ENCODE measurements at regions of chr2 and their contacts with region 1.

Region 1: GRCh38 chr2:112692496-112692911 is 28.3 kb upstream of the NT5DC4 start:
- DNase-seq: peak; percentile 83
- ATAC-seq: peak; percentile 94
- H3K4me3 Mint-ChIP-seq: no peak overlapping the region
- H3K27ac Mint-ChIP-seq: peak overlapping the region; percentile 83
- H3K4me1 Mint-ChIP-seq: peaks cover 37% of the 10 kb centered on the region
- H3K27me3 Mint-ChIP-seq: peaks cover 16% of the 10 kb centered on the region

Region 2: GRCh38 chr2:112601751-112602150 is 90.8 kb before region 1 on chr2:
- CTCF ChIA-PET with region 1: interaction called, 16 read pairs
- POLR2A ChIA-PET with region 1: no interaction called
- DNase-seq: no peak
- ATAC-seq: no peak
- H3K4me3 Mint-ChIP-seq: no peak overlapping the region
- H3K27ac Mint-ChIP-seq: no peak overlapping the region
- H3K4me1 Mint-ChIP-seq: peaks cover 5% of the 10 kb centered on the region
- H3K27me3 Mint-ChIP-seq: no peaks in the 10 kb centered on the region

Region 3: GRCh38 chr2:112645310-112646101 is 47.0 kb before region 1 on chr2 and contains the start of gene SLC20A1:
- CTCF ChIA-PET with region 1: interaction called, 20 read pairs
- POLR2A ChIA-PET with region 1: interaction called, 6 read pairs
- DNase-seq: peak; percentile 97
- ATAC-seq: peak; percentile 94
- H3K4me3 Mint-ChIP-seq: peak within 1 kb of the TSS; percentile 92
- H3K27ac Mint-ChIP-seq: peak within 1 kb of the TSS; percentile 90
- H3K4me1 Mint-ChIP-seq: peaks cover 65% of the 10 kb centered on the region
- H3K27me3 Mint-ChIP-seq: peaks cover 3% of the 10 kb centered on the region
- total RNA-seq, gene SLC20A1: 115 to 120 TPM

Region 4: GRCh38 chr2:112706170-112706664 is 13.7 kb after region 1 on chr2:
- CTCF ChIA-PET with region 1: interaction called, 45 read pairs
- POLR2A ChIA-PET with region 1: interaction called, 8 read pairs
- DNase-seq: peak; percentile 94
- ATAC-seq: peak; percentile 98
- H3K4me3 Mint-ChIP-seq: peak overlapping the region; percentile 58
- H3K27ac Mint-ChIP-seq: peak overlapping the region; percentile 71
- H3K4me1 Mint-ChIP-seq: peaks cover 41% of the 10 kb centered on the region
- H3K27me3 Mint-ChIP-seq: peaks cover 33% of the 10 kb centered on the region

Region 5: GRCh38 chr2:112740527-112740926 is 48.0 kb after region 1 on chr2:
- CTCF ChIA-PET with region 1: no interaction called
- POLR2A ChIA-PET with region 1: no interaction called
- DNase-seq: no peak
- ATAC-seq: no peak
- H3K4me3 Mint-ChIP-seq: no peak overlapping the region
- H3K27ac Mint-ChIP-seq: no peak overlapping the region
- H3K4me1 Mint-ChIP-seq: no peaks in the 10 kb centered on the region
- H3K27me3 Mint-ChIP-seq: no peaks in the 10 kb centered on the region

Region 6: DNA sequence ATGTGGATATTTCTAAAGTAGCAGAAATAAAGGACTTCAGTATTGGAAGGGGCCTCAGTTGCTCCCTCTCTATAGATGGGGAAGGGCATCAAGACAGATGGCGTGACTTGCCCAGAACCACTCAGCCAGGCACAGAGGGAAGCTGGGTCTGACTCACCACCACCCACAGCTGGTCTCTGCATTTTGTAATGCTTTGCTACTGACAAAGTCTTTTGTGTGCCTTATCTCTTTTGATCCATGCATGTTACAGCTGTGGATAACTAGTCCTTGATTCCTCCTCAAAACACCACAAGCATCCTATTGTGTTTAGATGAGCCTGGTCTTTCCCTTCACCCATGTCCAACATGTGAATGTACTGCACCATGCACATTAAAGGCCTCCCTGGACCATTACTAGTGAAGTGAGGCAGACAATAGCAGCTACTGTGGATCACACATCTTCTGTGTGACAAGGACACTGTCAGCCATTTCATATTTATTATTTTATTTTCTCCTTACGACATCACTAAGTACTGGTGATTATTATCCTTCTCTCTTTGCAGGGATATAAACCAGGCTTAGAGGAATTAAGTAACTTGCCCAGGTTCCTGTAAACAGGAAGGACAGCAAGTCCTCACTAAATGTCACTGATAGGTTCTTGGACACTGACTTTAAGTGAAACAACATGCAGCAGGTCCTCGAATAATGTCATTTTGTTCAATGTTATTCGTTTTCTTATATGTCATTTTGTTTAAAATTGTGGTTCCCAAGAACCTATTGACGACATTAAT is 188.9 kb after region 1 on chr2:
- CTCF ChIA-PET with region 1: no interaction called
- POLR2A ChIA-PET with region 1: no interaction called
- DNase-seq: no peak
- ATAC-seq: no peak
- H3K4me3 Mint-ChIP-seq: no peak overlapping the region
- H3K27ac Mint-ChIP-seq: no peak overlapping the region
- H3K4me1 Mint-ChIP-seq: peaks cover 32% of the 10 kb centered on the region
- H3K27me3 Mint-ChIP-seq: peaks cover under 1% of the 10 kb centered on the region

Measured in activated CD8-positive, alpha-beta T cell treated with anti-CD3 and anti-CD28 coated beads, Interleukin-2, amount 10 ng/mL, durations not matched to agents 7 days and 5 days (primary cell).